ENCODE measurements at regions of chr14 and their contacts with region 1.

Region 1: GRCh38 chr14:93067088-93067487 is 48.6 kb downstream of the ITPK1 start:
- DNase-seq: no peak
- ATAC-seq: no peak
- H3K4me3 ChIP-seq: no peak overlapping the region
- H3K4me3 Mint-ChIP-seq: peak overlapping the region; percentile 79
- H3K27ac ChIP-seq: peak overlapping the region; percentile 57 to 74
- H3K27ac Mint-ChIP-seq: peak overlapping the region; percentile 91
- H3K4me1 ChIP-seq: peaks cover 58% of the 10 kb centered on the region
- H3K4me1 Mint-ChIP-seq: peaks cover 73% of the 10 kb centered on the region
- H3K27me3 ChIP-seq: no peaks in the 10 kb centered on the region
- H3K27me3 Mint-ChIP-seq: no peaks in the 10 kb centered on the region
- CTCF ChIP-seq: no peak

Region 2: GRCh38 chr14:93081876-93082570 is 14.9 kb after region 1 on chr14:
- CTCF ChIA-PET with region 1: interaction called, 10 read pairs
- POLR2A ChIA-PET with region 1: interaction called, 3 read pairs
- intact Hi-C with region 1: loop called in 1 of 2 experiments (anchors 2 kb)
- DNase-seq: peak in 8 of 9 experiments; percentile 8 to 77 (median 51)
- ATAC-seq: peak; percentile 81
- H3K4me3 ChIP-seq: no peak overlapping the region
- H3K4me3 Mint-ChIP-seq: peak overlapping the region; percentile 40
- H3K27ac ChIP-seq: peak overlapping the region; percentile 38 to 74
- H3K27ac Mint-ChIP-seq: peak overlapping the region; percentile 75
- H3K4me1 ChIP-seq: peaks cover 75% of the 10 kb centered on the region
- H3K4me1 Mint-ChIP-seq: peaks cover 77% of the 10 kb centered on the region
- H3K27me3 ChIP-seq: no peaks in the 10 kb centered on the region
- H3K27me3 Mint-ChIP-seq: no peaks in the 10 kb centered on the region
- CTCF ChIP-seq: no peak

Measured in CD8-positive, alpha-beta T cell (primary cell).